Activated CD8-positive, alpha-beta memory T cell treated with anti-CD3 and anti-CD28 coated beads, Interleukin-2, amount 10 ng/mL, durations not matched to agents 7 days and 5 days (primary cell): ENCODE measurements at regions of chr15 and their contacts with region 1.

Region 1: DNA sequence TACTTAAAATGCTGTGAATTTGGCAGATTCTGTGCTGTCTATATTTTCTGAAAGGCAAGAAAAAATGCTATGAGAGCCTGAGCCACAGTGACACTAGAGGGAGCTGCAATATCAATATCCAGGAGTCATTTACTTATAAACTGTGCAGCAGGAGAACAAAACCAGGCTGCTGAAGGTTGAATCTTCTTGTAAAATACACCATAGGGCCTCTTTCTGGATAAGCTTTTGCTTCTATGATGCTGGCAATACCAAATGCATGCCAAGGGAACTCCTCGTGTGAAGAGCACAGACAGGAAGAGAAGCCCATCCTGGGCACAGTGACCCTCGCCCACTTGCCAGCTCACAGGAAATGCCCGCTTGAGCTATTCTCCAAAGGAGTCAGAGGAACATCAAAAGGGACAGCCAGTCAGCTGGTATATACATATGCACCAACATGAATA is 48.0 kb upstream of the TSPAN3 start:
- DNase-seq: peak; percentile 60
- ATAC-seq: peak; percentile 78
- H3K4me3 Mint-ChIP-seq: no peak overlapping the region
- H3K27ac Mint-ChIP-seq: no peak overlapping the region
- H3K4me1 Mint-ChIP-seq: peaks cover 15% of the 10 kb centered on the region
- H3K27me3 Mint-ChIP-seq: no peaks in the 10 kb centered on the region

Region 2: DNA sequence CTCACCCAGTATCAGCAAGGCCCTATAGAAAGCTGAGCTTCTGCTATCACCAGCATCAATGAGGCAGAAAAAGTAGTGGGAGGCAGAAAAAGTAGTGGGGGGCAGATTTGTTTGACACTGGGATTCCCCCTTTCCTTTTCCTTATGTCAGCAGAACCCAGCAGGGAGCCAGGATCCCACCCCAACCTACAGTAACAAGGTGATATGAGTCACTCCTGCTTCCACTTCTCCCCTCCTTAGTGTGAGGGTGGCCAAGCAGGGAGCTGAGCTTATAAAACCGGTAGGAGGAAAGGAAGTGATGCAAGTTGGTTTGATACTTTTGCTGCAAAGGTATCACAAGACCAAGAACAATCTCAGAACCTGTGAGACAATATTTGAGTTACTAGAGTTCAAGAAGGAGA is 342.4 kb before region 1 on chr15:
- CTCF ChIA-PET with region 1: no interaction called
- DNase-seq: no peak
- ATAC-seq: no peak
- H3K4me3 Mint-ChIP-seq: no peak overlapping the region
- H3K27ac Mint-ChIP-seq: peak overlapping the region; percentile 33
- H3K4me1 Mint-ChIP-seq: peaks cover 4% of the 10 kb centered on the region
- H3K27me3 Mint-ChIP-seq: no peaks in the 10 kb centered on the region

Region 3: GRCh38 chr15:77075528-77075927 is 43.4 kb before region 1 on chr15:
- CTCF ChIA-PET with region 1: no interaction called
- DNase-seq: no peak
- ATAC-seq: no peak
- H3K4me3 Mint-ChIP-seq: no peak overlapping the region
- H3K27ac Mint-ChIP-seq: no peak overlapping the region
- H3K4me1 Mint-ChIP-seq: peaks cover 4% of the 10 kb centered on the region
- H3K27me3 Mint-ChIP-seq: peaks cover 9% of the 10 kb centered on the region

Region 4: DNA sequence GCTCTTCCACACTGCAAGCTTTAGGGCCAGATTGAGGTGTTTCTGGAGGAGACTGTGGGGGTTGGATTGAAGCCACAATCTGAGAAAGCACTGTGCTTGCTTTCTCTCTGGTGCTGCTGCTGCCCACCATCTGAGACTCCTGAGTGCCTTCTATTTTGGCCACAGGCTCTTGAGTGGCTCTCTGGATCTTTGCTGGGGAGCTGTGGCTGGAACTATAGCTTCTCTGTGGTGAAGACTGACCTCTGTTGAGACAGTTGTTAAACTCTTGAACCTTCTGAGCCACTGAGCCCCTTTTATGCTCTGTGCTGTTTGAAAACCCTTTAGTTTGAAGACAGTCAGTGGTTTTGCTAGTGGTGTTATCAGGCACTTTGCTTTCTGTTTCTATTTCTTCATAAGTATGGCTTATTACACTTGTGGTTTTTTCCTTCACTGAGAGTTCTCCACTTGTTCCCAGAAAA is 60.7 kb after region 1 on chr15:
- CTCF ChIA-PET with region 1: interaction called, 17 read pairs
- DNase-seq: peak; percentile 66
- ATAC-seq: peak; percentile 82
- H3K4me3 Mint-ChIP-seq: peak overlapping the region; percentile 27
- H3K27ac Mint-ChIP-seq: peak overlapping the region; percentile 92
- H3K4me1 Mint-ChIP-seq: peaks cover 43% of the 10 kb centered on the region
- H3K27me3 Mint-ChIP-seq: no peaks in the 10 kb centered on the region

Region 5: GRCh38 chr15:77186594-77187011 is 67.7 kb after region 1 on chr15:
- CTCF ChIA-PET with region 1: interaction called, 26 read pairs
- DNase-seq: peak; percentile 45
- ATAC-seq: no peak
- H3K4me3 Mint-ChIP-seq: no peak overlapping the region
- H3K27ac Mint-ChIP-seq: no peak overlapping the region
- H3K4me1 Mint-ChIP-seq: peaks cover 47% of the 10 kb centered on the region
- H3K27me3 Mint-ChIP-seq: no peaks in the 10 kb centered on the region

Region 6: GRCh38 chr15:77496710-77497103 is 377.8 kb after region 1 on chr15:
- CTCF ChIA-PET with region 1: interaction called, 20 read pairs
- DNase-seq: peak; percentile 78
- ATAC-seq: peak; percentile 72
- H3K4me3 Mint-ChIP-seq: no peak overlapping the region
- H3K27ac Mint-ChIP-seq: no peak overlapping the region
- H3K4me1 Mint-ChIP-seq: peaks cover 12% of the 10 kb centered on the region
- H3K27me3 Mint-ChIP-seq: no peaks in the 10 kb centered on the region